ENCODE measurements at regions of chr7 and their contacts with region 1.

Region 1: GRCh38 chr7:44477063-44477830 is 13.2 kb downstream of the NUDCD3 start:
- H3K4me3 Mint-ChIP-seq: no peak overlapping the region
- H3K27ac Mint-ChIP-seq: no peak overlapping the region
- H3K4me1 Mint-ChIP-seq: peaks cover 9% of the 10 kb centered on the region
- H3K27me3 Mint-ChIP-seq: no peaks in the 10 kb centered on the region

Region 2: GRCh38 chr7:44072364-44073231 is 404.6 kb before region 1 on chr7:
- intact Hi-C with region 1: loop called (anchors 5 kb)
- H3K4me3 Mint-ChIP-seq: no peak overlapping the region
- H3K27ac Mint-ChIP-seq: peak overlapping the region; percentile 93
- H3K4me1 Mint-ChIP-seq: peaks cover 67% of the 10 kb centered on the region
- H3K27me3 Mint-ChIP-seq: no peaks in the 10 kb centered on the region

Region 3: DNA sequence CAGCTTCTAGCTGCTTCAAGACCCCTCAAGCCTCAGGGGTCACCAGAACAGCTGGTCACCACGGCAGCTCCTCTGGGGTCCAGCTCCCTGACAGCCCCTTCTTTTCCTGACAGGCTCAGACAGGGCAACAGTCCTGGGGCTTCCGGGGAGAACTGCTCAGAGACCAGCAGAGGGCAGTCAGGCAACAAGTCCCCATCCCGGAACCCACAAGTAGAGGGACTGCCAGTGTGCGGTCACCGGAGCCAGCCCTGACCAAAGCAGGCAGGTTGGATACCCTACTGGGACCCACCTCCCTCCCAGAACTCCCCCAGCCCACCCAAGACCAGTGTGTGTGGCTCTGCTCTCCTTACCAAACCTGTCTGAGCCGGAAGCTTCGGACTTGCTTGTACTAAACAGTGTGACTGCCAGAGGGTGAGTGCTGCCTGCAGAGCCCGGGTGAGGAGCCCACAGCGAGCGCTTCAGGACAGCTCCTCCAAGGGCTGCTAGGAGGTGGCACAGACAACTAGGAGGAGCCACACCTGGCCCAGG is 236.2 kb before region 1 on chr7:
- intact Hi-C with region 1: loop called (anchors 1 kb)
- H3K4me3 Mint-ChIP-seq: peak overlapping the region; percentile 11
- H3K27ac Mint-ChIP-seq: peak overlapping the region; percentile 13
- H3K4me1 Mint-ChIP-seq: peaks cover 21% of the 10 kb centered on the region
- H3K27me3 Mint-ChIP-seq: peaks cover 8% of the 10 kb centered on the region

Region 4: DNA sequence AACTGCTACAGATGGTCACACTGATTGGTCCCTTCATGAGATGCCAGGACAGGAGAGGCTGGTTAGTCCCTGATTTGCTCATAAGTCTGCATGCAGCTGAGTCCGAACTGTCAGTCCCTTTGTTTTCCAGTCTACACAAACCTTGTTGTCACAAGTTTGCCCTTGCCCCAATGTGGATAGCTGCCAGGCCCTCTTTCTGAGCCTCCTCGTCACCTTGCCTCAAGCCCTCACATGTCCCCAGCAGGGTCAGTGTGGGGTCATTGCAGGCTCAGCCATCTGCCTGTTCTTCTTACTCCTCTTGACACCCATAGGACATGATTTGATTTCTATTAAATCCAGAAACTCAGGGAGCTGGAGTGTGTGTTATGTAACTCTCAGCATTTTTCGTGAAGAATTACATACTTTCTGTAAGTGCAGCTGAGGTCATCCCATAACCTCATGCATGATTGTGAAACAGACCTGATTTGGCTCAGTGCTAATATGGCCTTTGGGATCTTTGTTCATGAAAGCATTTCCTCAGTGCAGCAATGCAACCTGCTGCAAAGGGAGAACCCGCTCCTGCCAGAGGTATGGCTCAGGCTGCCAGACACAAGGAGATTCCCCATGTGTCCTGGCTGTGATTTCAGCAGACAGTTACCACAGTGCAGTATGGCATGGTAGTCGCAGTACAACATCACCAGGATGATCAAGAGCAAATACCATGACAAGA is 201.4 kb after region 1 on chr7:
- intact Hi-C with region 1: no loop called
- H3K4me3 Mint-ChIP-seq: no peak overlapping the region
- H3K27ac Mint-ChIP-seq: no peak overlapping the region
- H3K4me1 Mint-ChIP-seq: peaks cover 12% of the 10 kb centered on the region
- H3K27me3 Mint-ChIP-seq: no peaks in the 10 kb centered on the region